Right cardiac atrium (tissue), 5 donors: ENCODE measurements at regions of chr1 and their contacts with region 1.

Region 1: DNA sequence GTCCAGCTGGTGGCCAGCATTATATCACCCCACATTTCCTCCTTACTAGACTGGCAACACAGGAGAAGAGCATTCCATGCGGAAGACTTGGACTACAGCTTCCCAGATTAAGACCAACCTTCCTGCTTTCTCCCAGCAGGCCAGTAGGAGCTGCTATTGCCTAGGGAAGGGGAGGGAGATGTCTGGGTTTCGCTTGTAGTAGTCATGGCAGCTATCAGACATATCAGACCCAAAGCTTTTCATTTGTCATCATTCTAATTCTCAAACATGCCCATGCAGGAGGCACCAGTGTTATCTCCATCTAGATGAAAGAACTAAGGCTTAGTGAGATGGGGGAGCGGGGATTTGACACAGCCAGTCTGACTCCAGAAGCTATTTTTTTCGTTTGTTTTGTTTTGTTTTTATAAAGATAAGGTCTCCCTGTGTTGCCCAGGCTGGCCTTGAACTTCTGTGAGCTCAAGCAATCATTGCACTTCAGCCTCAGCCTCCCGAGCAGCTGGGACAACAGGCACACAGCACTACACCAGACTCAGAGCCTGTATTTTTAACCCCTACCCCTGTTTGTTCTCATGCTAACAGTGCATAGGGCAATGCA is 4.5 kb downstream of the PLA2G2A start:
- DNase-seq: peak; percentile 62 to 80 (median 65)
- ATAC-seq: peak; percentile 84 to 86
- H3K4me3 ChIP-seq: no peak overlapping the region
- H3K27ac ChIP-seq: peak overlapping the region; percentile 73
- H3K4me1 ChIP-seq: peaks cover 6% of the 10 kb centered on the region
- H3K27me3 ChIP-seq: no peaks in the 10 kb centered on the region

Region 2: GRCh38 chr1:20069874-20070273 is 95.0 kb after region 1 on chr1 and contains the start of gene PLA2G5:
- intact Hi-C with region 1: loop called in 1 of 4 experiments (anchors 10 kb)
- DNase-seq: peak; percentile 83 to 95 (median 94)
- ATAC-seq: peak; percentile 87 to 91
- H3K4me3 ChIP-seq: peak within 1 kb of the TSS; percentile 32
- H3K27ac ChIP-seq: peak within 1 kb of the TSS; percentile 96
- H3K4me1 ChIP-seq: peaks cover 13% of the 10 kb centered on the region
- H3K27me3 ChIP-seq: no peaks in the 10 kb centered on the region
- total RNA-seq, gene PLA2G5: 91.6 to 122 (median 101) TPM